ENCODE measurements at regions of chr9 and their contacts with region 1.

Region 1: DNA sequence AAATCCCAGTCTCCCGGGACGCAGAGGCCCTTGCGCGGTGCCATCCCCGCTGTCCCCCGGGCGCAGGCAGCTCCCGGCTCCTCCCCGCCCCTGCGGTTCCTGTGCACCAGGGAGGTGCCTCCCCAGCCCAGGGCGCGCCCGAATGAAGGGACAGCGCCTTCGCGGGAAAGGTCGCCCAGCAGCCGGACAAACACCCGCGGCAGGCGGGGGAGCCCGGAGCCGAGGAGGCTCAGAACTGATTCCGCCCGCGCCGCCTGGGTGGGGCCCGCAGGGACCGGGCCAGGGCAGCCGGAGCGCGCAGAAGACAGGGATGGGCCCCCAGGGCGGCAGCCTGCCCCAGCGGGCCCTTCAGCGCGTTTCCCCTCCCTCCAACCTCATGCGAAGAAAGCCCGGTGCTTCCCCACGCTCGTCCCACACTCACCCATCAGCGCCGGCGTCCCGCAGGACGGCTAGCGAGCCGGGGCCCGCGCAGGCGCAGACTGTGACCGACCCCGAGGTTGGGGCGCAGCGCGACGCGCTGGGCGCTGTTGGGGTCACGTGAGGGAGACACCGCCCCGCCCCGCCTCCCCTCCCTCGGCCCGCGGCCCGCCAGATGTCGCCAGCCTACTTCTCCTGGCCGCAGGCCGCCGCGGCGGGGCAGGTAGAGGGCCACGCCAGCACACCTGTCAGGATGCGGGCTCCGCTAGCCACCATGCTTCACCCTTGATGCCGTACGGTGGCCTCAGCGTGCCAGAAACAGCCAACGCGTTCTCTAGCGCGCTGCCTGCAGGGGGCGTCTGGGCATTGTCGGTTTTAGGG is at the start of gene SLC25A51:
- DNase-seq: peak; percentile 87
- ATAC-seq: peak; percentile 91
- H3K4me3 ChIP-seq: peak within 1 kb of the TSS; percentile 83 to 87
- H3K27ac ChIP-seq: peak within 1 kb of the TSS; percentile 88
- H3K4me1 ChIP-seq: peaks cover 9 to 18% of the 10 kb centered on the region in 2 experiments; a peak in 2 of 4 replicates
- H3K27me3 ChIP-seq: no peaks in the 10 kb centered on the region
- CTCF ChIP-seq: peak; percentile 85 to 92 (median 88)
- POLR2A ChIP-seq: peak; percentile 85
- RAD21 ChIP-seq: peak; percentile 85
- total RNA-seq, gene SLC25A51: 27.3 TPM

Region 2: DNA sequence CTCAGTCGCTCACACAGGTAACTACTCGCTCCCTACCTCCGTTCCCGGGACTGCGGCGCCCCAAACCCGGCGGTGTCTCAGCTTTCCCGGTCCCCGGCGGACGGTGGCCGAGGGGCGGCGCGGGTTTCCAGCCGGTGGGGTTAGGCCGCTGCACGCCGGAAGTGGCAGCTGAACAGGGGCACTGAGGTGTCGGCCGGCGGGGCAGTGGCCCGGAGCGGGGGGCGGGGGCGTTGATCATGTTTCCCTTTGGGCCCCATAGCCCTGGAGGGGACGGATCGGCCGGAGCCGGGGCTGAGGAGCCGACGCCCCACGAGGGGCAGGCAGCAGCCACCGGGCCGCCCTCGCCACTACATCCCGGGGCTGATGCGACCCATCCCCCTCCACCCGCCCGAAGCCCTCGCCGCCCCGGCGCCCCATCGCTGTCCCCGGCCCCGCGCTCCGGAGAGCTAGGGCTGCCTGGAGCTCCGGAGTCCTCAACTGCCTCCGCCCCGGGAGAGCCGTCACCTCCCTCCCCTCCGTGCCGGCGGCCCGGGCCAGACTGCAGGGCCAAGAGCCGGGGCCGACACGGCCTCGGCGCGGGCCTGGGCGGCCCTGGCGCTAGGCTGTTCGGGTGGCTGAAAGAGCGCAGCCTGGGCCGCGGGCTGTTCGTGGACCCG is 103.1 kb before region 1 on chr9 and contains the start of gene DCAF10:
- CTCF ChIA-PET with region 1: no interaction called
- POLR2A ChIA-PET with region 1: no interaction called
- RAD21 ChIA-PET with region 1: no interaction called
- intact Hi-C with region 1: loop called (anchors 5 kb)
- DNase-seq: peak; percentile 68
- ATAC-seq: peak; percentile 84
- H3K4me3 ChIP-seq: peak within 1 kb of the TSS; percentile 77 to 87
- H3K27ac ChIP-seq: peak within 1 kb of the TSS; percentile 91
- H3K4me1 ChIP-seq: peaks cover 10 to 20% of the 10 kb centered on the region in 2 experiments; a peak in 3 of 4 replicates
- H3K27me3 ChIP-seq: no peaks in the 10 kb centered on the region
- CTCF ChIP-seq: no peak
- POLR2A ChIP-seq: peak; percentile 77
- RAD21 ChIP-seq: no peak
- total RNA-seq, gene DCAF10: 20.6 TPM

Region 3: GRCh38 chr9:37812773-37813379 is 91.0 kb before region 1 on chr9:
- CTCF ChIA-PET with region 1: no interaction called
- POLR2A ChIA-PET with region 1: no interaction called
- RAD21 ChIA-PET with region 1: no interaction called
- intact Hi-C with region 1: no loop called
- DNase-seq: no peak
- ATAC-seq: no peak
- H3K4me3 ChIP-seq: no peak overlapping the region
- H3K27ac ChIP-seq: no peak overlapping the region
- H3K4me1 ChIP-seq: no peaks in the 10 kb centered on the region
- H3K27me3 ChIP-seq: no peaks in the 10 kb centered on the region
- CTCF ChIP-seq: no peak
- POLR2A ChIP-seq: no peak
- RAD21 ChIP-seq: no peak

Region 4: GRCh38 chr9:37984672-37985611 is 81.1 kb after region 1 on chr9:
- CTCF ChIA-PET with region 1: no interaction called
- POLR2A ChIA-PET with region 1: no interaction called
- RAD21 ChIA-PET with region 1: no interaction called
- intact Hi-C with region 1: no loop called
- DNase-seq: no peak
- ATAC-seq: peak; percentile 95
- H3K4me3 ChIP-seq: no peak overlapping the region
- H3K27ac ChIP-seq: peak overlapping the region; percentile 50
- H3K4me1 ChIP-seq: peaks cover 31 to 32% of the 10 kb centered on the region in 2 experiments
- H3K27me3 ChIP-seq: no peaks in the 10 kb centered on the region
- CTCF ChIP-seq: no peak
- POLR2A ChIP-seq: no peak
- RAD21 ChIP-seq: peak; percentile 20; the same call in 1 of the 2 replicates

Region 5: GRCh38 chr9:38068866-38069629 is 165.2 kb after region 1 on chr9 and contains the start of gene SHB:
- CTCF ChIA-PET with region 1: no interaction called
- POLR2A ChIA-PET with region 1: no interaction called
- RAD21 ChIA-PET with region 1: no interaction called
- intact Hi-C with region 1: loop called (anchors 2 kb)
- DNase-seq: no peak
- ATAC-seq: peak; percentile 74
- H3K4me3 ChIP-seq: peak within 1 kb of the TSS; percentile 66 to 84
- H3K27ac ChIP-seq: peak within 1 kb of the TSS; percentile 98
- H3K4me1 ChIP-seq: peaks cover 37 to 52% of the 10 kb centered on the region in 2 experiments; a peak in 3 of 4 replicates
- H3K27me3 ChIP-seq: no peaks in the 10 kb centered on the region
- CTCF ChIP-seq: peak in 1 of 3 experiments; percentile 33; a peak in 1 of 6 replicates
- POLR2A ChIP-seq: peak; percentile 62
- RAD21 ChIP-seq: no peak
- total RNA-seq, gene SHB: 28.7 TPM

Region 6: DNA sequence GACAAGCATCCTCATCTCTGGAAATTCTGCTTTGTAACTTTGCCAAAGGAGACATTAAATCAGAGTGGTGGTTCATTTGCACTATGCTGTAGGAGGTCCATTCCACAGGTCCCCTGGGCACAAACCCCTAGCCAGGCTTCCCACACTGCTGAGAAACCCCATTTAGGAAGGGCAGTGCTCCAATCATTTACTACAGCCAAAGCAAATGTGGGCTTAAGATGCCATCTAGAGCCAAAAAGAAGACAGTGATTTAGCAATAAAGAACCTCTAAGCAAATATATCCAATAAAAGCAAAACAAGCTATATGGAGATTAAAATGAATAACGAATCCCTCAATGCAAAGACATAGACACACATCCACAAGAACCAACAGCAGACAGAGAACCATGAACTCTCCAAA is 359.7 kb after region 1 on chr9:
- CTCF ChIA-PET with region 1: interaction called, 3 read pairs
- POLR2A ChIA-PET with region 1: no interaction called
- RAD21 ChIA-PET with region 1: no interaction called
- intact Hi-C with region 1: loop called (anchors 1 kb)
- DNase-seq: peak; percentile 7
- ATAC-seq: peak; percentile 46; the same call in 1 of the 2 replicates
- H3K4me3 ChIP-seq: no peak overlapping the region
- H3K27ac ChIP-seq: no peak overlapping the region
- H3K4me1 ChIP-seq: no peaks in the 10 kb centered on the region
- H3K27me3 ChIP-seq: no peaks in the 10 kb centered on the region
- CTCF ChIP-seq: peak in 2 of 3 experiments; percentile 40 to 72; a peak in 3 of 6 replicates
- POLR2A ChIP-seq: no peak
- RAD21 ChIP-seq: peak; percentile 86

Measured in HCT116 (cell line).